HepG2 (cell line): ENCODE measurements at regions of chr5 and their contacts with region 1.

Region 1: DNA sequence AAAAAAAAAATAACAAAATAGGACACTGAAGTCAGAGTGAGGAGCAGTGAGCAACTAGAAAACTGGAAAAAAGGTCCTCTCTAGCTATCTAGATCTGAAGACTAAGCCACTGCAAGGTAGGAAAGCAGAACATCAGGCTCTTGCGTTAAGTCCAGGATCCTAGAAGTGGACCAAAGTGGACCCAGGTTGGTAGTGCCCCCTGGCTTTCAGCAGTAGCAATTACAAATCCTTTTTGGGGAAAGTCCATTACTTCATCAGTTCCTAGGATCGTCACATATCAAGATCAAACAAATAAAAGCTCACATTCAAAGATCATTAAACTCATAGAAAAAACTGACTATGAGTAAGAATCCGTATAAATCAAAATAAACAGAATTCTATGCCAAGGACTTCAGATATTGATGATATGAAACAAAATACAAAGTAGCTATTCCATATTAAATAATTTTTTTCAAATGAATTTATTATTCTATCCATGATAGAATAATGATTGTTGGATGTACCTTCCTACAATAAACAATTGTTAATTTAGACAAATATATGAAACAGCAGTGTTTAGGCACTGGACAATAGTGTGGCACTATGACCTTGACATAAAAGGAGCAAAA is 6.5 kb upstream of the RICTOR start:
- DNase-seq: peak; percentile 56
- ATAC-seq: peak; percentile 80
- H3K4me3 ChIP-seq: no peak overlapping the region; a peak in 1 of 6 replicates
- H3K27ac ChIP-seq: no peak overlapping the region
- H3K4me1 ChIP-seq: peaks cover 16% of the 10 kb centered on the region
- H3K27me3 ChIP-seq: no peaks in the 10 kb centered on the region
- CTCF ChIP-seq: peak; percentile 81
- EP300 ChIP-seq: no peak
- POLR2A ChIP-seq: no peak
- RAD21 ChIP-seq: peak; percentile 36; the same call in 1 of the 2 replicates

Region 2: GRCh38 chr5:38994324-38994927 is 86.3 kb before region 1 on chr5:
- CTCF ChIA-PET with region 1: interaction called, 19 read pairs
- POLR2A ChIA-PET with region 1: no interaction called
- in situ Hi-C with region 1: no loop called
- intact Hi-C with region 1: loop called (anchors 1 kb)
- DNase-seq: peak; percentile 64
- ATAC-seq: peak; percentile 83
- H3K4me3 ChIP-seq: no peak overlapping the region
- H3K27ac ChIP-seq: no peak overlapping the region
- H3K4me1 ChIP-seq: no peaks in the 10 kb centered on the region
- H3K27me3 ChIP-seq: no peaks in the 10 kb centered on the region
- CTCF ChIP-seq: peak; percentile 43
- EP300 ChIP-seq: no peak
- POLR2A ChIP-seq: no peak
- RAD21 ChIP-seq: no peak

Region 3: DNA sequence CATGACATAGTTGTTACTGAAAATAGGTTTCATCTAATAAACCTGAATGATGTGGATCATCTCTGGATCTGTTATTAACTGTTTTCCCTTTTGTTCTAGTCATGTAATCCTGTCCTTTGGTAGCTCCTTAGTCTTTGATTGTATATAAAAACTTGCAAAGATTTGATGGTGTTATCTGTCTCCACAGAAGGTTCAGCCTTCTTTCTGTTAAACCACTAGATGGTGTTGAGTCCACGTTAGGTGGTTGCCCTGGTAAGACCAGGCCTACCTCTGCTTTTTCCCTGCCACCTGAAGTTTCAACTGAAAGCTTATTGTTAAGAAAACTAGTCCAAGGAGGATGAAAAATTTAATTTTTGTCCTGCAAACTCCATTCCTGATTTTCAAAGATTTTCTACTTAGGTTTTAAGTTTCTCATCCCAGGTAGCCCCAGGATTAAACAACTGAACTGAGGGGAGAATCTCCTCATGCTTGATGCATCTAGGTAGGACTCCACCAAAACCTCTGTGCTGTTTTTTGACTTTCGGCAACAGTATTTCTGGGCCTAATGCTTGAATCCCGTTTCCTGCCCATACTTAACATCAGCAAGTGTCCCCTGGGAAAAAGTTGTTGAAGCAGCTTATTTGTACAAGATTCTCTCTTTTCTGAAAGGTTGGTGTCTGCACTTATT is 75.0 kb before region 1 on chr5:
- CTCF ChIA-PET with region 1: interaction called, 7 read pairs
- POLR2A ChIA-PET with region 1: no interaction called
- in situ Hi-C with region 1: no loop called
- intact Hi-C with region 1: loop called (anchors 1 kb)
- DNase-seq: peak; percentile 12
- ATAC-seq: peak; percentile 84
- H3K4me3 ChIP-seq: no peak overlapping the region
- H3K27ac ChIP-seq: no peak overlapping the region
- H3K4me1 ChIP-seq: no peaks in the 10 kb centered on the region
- H3K27me3 ChIP-seq: no peaks in the 10 kb centered on the region
- CTCF ChIP-seq: peak; percentile 47
- EP300 ChIP-seq: no peak
- POLR2A ChIP-seq: no peak
- RAD21 ChIP-seq: no peak

Region 4: GRCh38 chr5:39249069-39249468 is 168.4 kb after region 1 on chr5:
- CTCF ChIA-PET with region 1: no interaction called
- POLR2A ChIA-PET with region 1: no interaction called
- in situ Hi-C with region 1: no loop called
- intact Hi-C with region 1: no loop called
- DNase-seq: no peak
- ATAC-seq: no peak
- H3K4me3 ChIP-seq: no peak overlapping the region
- H3K27ac ChIP-seq: no peak overlapping the region
- H3K4me1 ChIP-seq: no peaks in the 10 kb centered on the region
- H3K27me3 ChIP-seq: no peaks in the 10 kb centered on the region
- CTCF ChIP-seq: no peak
- EP300 ChIP-seq: no peak
- POLR2A ChIP-seq: no peak
- RAD21 ChIP-seq: no peak